ENCODE measurements at regions of chr12 and their contacts with region 1.

Region 1: DNA sequence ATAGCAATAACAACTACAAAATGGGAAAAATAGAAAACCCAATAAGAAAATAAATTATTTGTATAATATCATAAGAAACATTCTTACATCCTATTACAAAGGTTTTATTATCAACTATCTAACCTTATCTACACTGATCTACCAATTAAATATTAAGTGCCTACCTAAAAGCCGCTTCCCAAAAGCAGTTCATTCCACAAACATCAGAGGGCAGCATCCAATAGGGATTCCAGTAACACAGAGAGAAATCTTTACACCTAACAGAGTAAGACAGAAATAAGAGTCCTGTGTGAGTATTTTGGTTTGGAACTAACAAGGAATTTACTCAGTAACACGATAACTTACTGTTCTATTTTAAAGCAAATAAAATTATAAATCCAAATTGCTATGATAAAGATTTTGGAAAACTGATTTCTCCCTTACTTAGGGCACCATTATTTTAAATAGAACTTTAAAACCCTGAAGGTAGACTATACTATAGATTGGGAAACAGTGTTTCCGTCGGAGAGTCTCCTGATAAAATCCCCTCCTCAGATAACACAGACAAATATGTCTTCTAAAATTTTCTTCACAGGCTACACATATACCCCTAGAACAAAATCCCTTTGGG is 15.0 kb downstream of the GXYLT1 start:
- DNase-seq: no peak
- H3K4me3 Mint-ChIP-seq: no peak overlapping the region
- H3K27ac Mint-ChIP-seq: no peak overlapping the region
- H3K4me1 Mint-ChIP-seq: peaks cover 14% of the 10 kb centered on the region
- H3K27me3 Mint-ChIP-seq: no peaks in the 10 kb centered on the region

Region 2: GRCh38 chr12:42332301-42333285 is 202.9 kb after region 1 on chr12:
- intact Hi-C with region 1: loop called (anchors 1 kb)
- DNase-seq: no peak
- H3K4me3 Mint-ChIP-seq: no peak overlapping the region
- H3K27ac Mint-ChIP-seq: no peak overlapping the region
- H3K4me1 Mint-ChIP-seq: peaks cover 47% of the 10 kb centered on the region
- H3K27me3 Mint-ChIP-seq: no peaks in the 10 kb centered on the region